PC-3 (cell line): ENCODE measurements at regions of chr12 and their contacts with region 1.

Region 1: GRCh38 chr12:20369305-20370005 is 1.1 kb downstream of the PDE3A start:
- DNase-seq: no peak
- ATAC-seq: peak; percentile 65
- H3K4me3 ChIP-seq: peak overlapping the region; percentile 67
- H3K27ac ChIP-seq: peak overlapping the region; percentile 66; the same call in 1 of the 2 replicates
- H3K4me1 ChIP-seq: no peaks in the 10 kb centered on the region
- H3K27me3 ChIP-seq: peaks cover 68% of the 10 kb centered on the region
- CTCF ChIP-seq: no peak

Region 2: GRCh38 chr12:20125276-20125798 is 244.1 kb before region 1 on chr12:
- CTCF ChIA-PET with region 1: no interaction called
- POLR2A ChIA-PET with region 1: no interaction called
- intact Hi-C with region 1: loop called (anchors 5 kb)
- DNase-seq: no peak
- ATAC-seq: no peak
- H3K4me3 ChIP-seq: no peak overlapping the region
- H3K27ac ChIP-seq: no peak overlapping the region
- H3K4me1 ChIP-seq: no peaks in the 10 kb centered on the region
- H3K27me3 ChIP-seq: no peaks in the 10 kb centered on the region
- CTCF ChIP-seq: no peak